Panc1 (cell line): ENCODE measurements at regions of chr10 and their contacts with region 1.

Region 1: GRCh38 chr10:23768270-23768669 is 329.4 kb downstream of the OTUD1 start:
- DNase-seq: no peak
- ATAC-seq: no peak
- H3K4me3 ChIP-seq: no peak overlapping the region
- H3K27ac ChIP-seq: no peak overlapping the region
- H3K4me1 ChIP-seq: no peaks in the 10 kb centered on the region
- H3K27me3 ChIP-seq: no peaks in the 10 kb centered on the region
- CTCF ChIP-seq: no peak

Region 2: GRCh38 chr10:21843645-21844044 is 1924.6 kb before region 1 on chr10:
- CTCF ChIA-PET with region 1: no interaction called
- POLR2A ChIA-PET with region 1: interaction called, 10 read pairs
- in situ Hi-C with region 1: no loop called
- intact Hi-C with region 1: no loop called
- DNase-seq: no peak
- ATAC-seq: no peak
- H3K4me3 ChIP-seq: no peak overlapping the region
- H3K27ac ChIP-seq: no peak overlapping the region
- H3K4me1 ChIP-seq: no peaks in the 10 kb centered on the region
- H3K27me3 ChIP-seq: no peaks in the 10 kb centered on the region
- CTCF ChIP-seq: no peak

Region 3: GRCh38 chr10:23859598-23859997 is 91.3 kb after region 1 on chr10:
- CTCF ChIA-PET with region 1: no interaction called
- POLR2A ChIA-PET with region 1: no interaction called
- in situ Hi-C with region 1: no loop called
- intact Hi-C with region 1: no loop called
- DNase-seq: no peak
- ATAC-seq: no peak
- H3K4me3 ChIP-seq: no peak overlapping the region
- H3K27ac ChIP-seq: no peak overlapping the region
- H3K4me1 ChIP-seq: no peaks in the 10 kb centered on the region
- H3K27me3 ChIP-seq: no peaks in the 10 kb centered on the region
- CTCF ChIP-seq: no peak

Region 4: DNA sequence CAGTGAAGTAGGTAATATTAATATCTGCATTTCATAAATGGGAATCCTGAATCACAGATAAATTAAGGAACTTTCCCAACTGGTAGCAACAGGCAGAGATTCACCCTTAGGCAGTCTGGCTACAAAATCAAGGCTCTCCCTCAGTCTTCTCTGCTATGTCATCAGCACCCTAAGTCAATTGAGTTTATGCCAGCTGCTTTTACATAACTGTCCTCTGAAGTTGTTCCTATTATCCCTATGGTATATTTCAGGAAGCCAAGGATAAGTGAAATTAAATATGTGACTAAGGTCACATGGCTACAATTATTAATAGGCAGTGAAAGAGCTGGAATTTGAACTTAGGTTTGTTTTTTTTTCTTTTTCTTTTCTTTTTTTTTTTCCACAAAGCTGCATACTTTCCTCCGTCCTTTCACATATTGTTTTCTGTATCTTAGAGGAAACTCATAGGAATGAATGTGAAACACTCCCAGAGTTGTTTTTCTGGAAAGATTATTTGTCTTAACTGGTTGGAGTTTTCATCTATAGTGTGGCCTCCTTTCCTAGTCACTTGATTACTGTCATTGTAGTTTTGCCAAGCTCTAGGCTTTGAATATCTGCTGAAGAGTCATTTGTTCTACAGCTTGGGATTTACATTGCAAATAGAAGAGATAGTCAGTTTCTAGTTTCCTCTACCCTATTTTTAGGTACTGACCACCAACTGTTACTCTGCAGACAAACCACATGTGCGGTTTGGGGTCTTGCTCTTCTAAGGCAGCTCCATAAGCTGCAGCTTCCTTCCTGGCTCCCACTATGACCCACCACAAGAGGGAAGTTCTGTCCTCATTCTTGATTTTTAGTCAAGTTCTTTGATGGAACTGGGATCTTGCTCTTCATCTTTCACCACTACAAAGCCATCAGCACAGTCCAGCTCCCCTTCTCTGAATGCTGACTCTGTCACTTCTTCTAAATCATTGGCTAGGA is 102.7 kb after region 1 on chr10:
- CTCF ChIA-PET with region 1: no interaction called
- POLR2A ChIA-PET with region 1: no interaction called
- in situ Hi-C with region 1: no loop called
- intact Hi-C with region 1: no loop called
- DNase-seq: no peak
- ATAC-seq: no peak
- H3K4me3 ChIP-seq: no peak overlapping the region
- H3K27ac ChIP-seq: no peak overlapping the region
- H3K4me1 ChIP-seq: no peaks in the 10 kb centered on the region
- H3K27me3 ChIP-seq: no peaks in the 10 kb centered on the region
- CTCF ChIP-seq: no peak

Region 5: DNA sequence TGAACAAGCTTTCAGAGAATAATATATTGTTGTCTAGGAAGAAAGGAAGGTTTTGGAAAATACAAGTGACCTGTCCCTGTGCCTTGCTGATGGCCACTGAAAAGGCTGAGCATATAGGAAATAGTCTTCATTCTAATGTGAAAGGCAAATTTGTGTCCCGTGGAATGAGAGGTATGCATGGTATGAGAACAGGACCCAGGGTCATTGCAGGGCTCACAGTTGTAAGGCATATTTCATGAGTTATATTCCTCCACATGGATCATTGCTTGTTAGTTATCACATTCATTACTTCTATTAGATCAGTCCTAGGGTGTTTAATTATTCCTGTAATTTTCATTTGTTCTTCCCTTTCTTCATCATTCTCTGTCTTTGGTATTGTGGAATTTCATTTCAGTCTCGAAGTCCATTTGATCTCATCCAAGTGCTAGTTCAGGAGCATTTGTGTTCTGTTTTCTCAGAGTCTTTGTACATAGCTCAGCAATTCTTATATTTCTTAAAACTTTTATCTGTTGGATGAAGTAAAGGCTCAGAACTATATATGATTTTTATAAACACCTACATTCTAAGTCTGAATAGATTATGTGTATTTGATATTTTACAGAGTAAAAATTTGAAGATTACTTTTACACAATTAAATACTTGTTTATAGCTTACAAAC is 994.8 kb after region 1 on chr10:
- CTCF ChIA-PET with region 1: no interaction called
- POLR2A ChIA-PET with region 1: no interaction called
- in situ Hi-C with region 1: no loop called
- intact Hi-C with region 1: no loop called
- DNase-seq: no peak
- ATAC-seq: peak; percentile 71; the same call in 1 of the 2 replicates
- H3K4me3 ChIP-seq: no peak overlapping the region
- H3K27ac ChIP-seq: no peak overlapping the region
- H3K4me1 ChIP-seq: no peaks in the 10 kb centered on the region
- H3K27me3 ChIP-seq: no peaks in the 10 kb centered on the region
- CTCF ChIP-seq: no peak